ENCODE measurements at regions of chr21 and their contacts with region 1.

Region 1: DNA sequence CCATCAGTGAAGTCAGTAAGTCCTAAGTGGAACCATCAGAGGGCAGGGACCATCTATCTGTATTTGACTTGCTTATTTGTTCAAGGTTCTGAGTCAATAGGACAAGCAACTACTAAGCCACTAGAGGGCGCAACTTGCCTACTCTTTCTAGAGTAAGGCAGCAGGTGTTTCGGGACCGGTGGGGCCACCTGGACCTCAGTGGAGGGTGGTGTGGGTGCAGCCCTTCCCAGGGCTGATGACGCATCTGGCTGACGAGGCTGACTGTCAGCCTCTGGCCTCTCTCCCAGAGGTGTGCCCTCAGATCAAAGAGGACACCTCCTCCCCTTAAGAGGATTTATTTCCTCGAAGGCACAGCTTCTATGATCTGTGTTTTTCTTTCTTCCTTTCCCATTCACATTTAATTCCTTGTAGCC is 6.6 kb downstream of the CBR3 start:
- DNase-seq: peak; percentile 87
- ATAC-seq: peak; percentile 99
- H3K4me3 ChIP-seq: no peak overlapping the region
- H3K27ac ChIP-seq: no peak overlapping the region
- H3K4me1 ChIP-seq: peaks cover 1% of the 10 kb centered on the region
- H3K27me3 ChIP-seq: no peaks in the 10 kb centered on the region
- CTCF ChIP-seq: peak; percentile 88

Region 2: DNA sequence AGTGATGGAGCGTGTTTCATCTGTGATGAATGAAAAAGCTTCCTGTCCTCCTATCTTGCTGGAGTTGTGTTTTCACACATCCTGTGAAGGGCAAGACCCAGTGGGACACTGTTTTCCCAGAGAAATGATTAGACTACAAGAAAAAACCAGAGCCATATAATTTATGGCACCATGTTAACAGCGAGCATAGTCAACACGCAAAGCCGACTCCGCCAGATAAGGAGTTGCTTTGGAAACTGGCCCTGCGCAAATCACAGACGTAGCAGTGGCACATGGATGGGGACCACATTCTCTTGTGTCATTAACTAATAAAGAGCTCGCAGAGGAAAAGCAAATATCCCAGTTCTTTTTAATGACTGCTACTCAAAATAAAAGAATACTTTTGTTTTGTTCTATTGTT is 621.2 kb before region 1 on chr21:
- intact Hi-C with region 1: no loop called
- DNase-seq: no peak
- ATAC-seq: no peak
- H3K4me3 ChIP-seq: no peak overlapping the region
- H3K27ac ChIP-seq: no peak overlapping the region
- H3K4me1 ChIP-seq: no peaks in the 10 kb centered on the region
- H3K27me3 ChIP-seq: no peaks in the 10 kb centered on the region
- CTCF ChIP-seq: no peak

Region 3: DNA sequence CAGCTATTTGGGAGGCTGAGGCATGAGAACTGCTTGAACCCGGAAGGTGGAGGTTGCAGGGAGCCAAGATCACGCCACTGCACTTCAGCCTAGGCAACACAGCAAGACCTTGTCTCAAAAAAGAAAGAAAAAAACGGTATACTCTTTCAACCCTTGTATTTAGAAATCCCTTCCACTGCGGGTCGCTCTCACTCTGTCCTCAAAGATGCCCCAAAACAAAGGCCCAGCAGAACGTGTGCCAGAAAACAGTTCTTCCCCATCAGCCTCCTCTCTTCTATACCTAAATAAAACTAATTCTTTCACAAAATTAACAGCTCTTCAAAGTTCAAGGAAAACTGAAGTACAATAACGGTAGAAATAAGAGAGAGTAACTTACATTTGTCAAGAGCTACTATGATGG is 94.4 kb before region 1 on chr21:
- intact Hi-C with region 1: no loop called
- DNase-seq: no peak
- ATAC-seq: no peak
- H3K4me3 ChIP-seq: no peak overlapping the region
- H3K27ac ChIP-seq: no peak overlapping the region
- H3K4me1 ChIP-seq: peaks cover 11% of the 10 kb centered on the region
- H3K27me3 ChIP-seq: no peaks in the 10 kb centered on the region
- CTCF ChIP-seq: no peak

Region 4: DNA sequence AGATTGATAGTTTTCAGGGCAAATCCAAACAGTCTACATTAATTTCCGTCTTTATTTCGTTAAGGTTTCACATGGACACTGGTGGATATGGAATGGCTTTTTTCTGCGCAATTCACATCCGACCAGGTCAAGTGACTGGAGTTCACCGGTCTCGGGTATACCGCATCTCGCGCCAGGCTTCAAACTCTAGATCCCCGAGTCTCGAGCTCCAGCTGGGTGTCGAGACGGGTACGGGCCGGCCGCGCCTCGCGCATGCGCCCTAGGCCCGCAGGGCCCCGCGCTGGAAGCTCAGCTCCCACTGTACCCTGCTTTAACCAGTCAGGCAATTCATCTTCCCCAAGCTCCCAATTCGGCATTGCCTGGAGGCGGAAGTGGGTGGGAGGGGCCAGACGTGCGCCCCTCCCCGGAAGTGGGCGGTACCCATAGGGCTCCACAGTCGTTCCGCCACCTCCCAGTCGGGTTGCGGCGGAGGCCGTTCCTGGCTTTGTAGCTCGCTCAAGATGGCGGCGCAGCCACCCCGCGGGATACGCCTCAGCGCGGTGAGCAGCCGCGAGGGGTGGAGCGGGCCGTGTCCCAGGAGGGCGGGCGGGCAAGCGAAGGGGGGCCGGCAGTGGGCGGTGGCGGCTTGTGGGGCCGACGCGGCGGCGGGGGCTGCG is 178.4 kb after region 1 on chr21 and contains the start of gene MORC3:
- intact Hi-C with region 1: loop called (anchors 10 kb)
- DNase-seq: peak; percentile 99
- ATAC-seq: peak; percentile 98
- H3K4me3 ChIP-seq: peak within 1 kb of the TSS; percentile 88
- H3K27ac ChIP-seq: peak within 1 kb of the TSS; percentile 98
- H3K4me1 ChIP-seq: peaks cover 30% of the 10 kb centered on the region
- H3K27me3 ChIP-seq: no peaks in the 10 kb centered on the region
- CTCF ChIP-seq: no peak
- total RNA-seq, gene MORC3: 32.3 TPM

Region 5: GRCh38 chr21:36429947-36430546 is 288.5 kb after region 1 on chr21:
- intact Hi-C with region 1: no loop called
- DNase-seq: peak; percentile 79
- ATAC-seq: peak; percentile 90
- H3K4me3 ChIP-seq: peak overlapping the region; percentile 22
- H3K27ac ChIP-seq: peak overlapping the region; percentile 47
- H3K4me1 ChIP-seq: peaks cover 25% of the 10 kb centered on the region
- H3K27me3 ChIP-seq: no peaks in the 10 kb centered on the region
- CTCF ChIP-seq: no peak